ENCODE measurements at regions of chr13 and their contacts with region 1.

Region 1: GRCh38 chr13:31967155-31967554 is 64.4 kb upstream of the FRY start:
- DNase-seq: no peak
- H3K4me3 Mint-ChIP-seq: no peak overlapping the region
- H3K27ac Mint-ChIP-seq: no peak overlapping the region
- H3K4me1 Mint-ChIP-seq: peaks cover 8% of the 10 kb centered on the region
- H3K27me3 Mint-ChIP-seq: peaks cover 4% of the 10 kb centered on the region

Region 2: DNA sequence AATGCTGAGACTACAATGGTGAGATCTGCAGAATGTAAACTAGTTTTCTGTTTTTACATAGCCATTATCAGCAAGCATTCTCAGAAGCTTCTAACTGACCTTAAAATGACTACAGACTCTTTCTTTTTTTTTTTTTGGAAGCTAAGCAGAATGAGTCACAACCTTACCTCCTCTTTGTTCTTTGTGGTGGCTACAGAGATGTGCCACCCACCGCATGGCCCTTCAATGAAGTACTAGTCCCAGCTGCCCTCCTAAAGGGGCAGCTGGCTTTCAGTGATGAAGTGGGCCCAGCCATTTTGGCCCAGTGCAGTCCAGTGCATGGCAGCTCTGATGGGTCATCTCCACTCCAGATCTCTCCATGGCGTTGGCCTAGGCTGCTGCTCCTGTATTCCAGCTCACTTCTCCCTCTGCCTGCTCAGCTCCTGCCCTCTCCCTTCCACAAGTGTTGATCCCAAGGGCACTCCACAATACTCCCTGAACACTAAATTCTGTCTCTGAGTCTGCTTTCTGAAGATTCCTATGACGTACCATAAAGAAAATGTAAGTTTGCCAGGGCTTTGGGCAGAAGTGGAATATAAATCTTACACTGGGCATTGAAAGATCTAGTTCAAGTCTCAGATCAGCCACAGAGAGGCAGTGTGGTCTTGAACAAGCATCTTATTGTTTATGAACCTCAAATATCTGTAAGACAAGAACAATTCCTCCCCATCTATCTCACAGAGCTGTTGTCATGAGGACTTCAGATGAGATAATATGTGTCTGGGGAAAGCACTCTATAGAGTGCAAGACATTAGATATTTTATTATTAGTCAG is 142.2 kb before region 1 on chr13:
- CTCF ChIA-PET with region 1: no interaction called
- POLR2A ChIA-PET with region 1: no interaction called
- DNase-seq: no peak
- H3K4me3 Mint-ChIP-seq: no peak overlapping the region
- H3K27ac Mint-ChIP-seq: no peak overlapping the region
- H3K4me1 Mint-ChIP-seq: peaks cover 18% of the 10 kb centered on the region
- H3K27me3 Mint-ChIP-seq: peaks cover 2% of the 10 kb centered on the region

Region 3: GRCh38 chr13:31955741-31956140 is 11.4 kb before region 1 on chr13:
- CTCF ChIA-PET with region 1: interaction called, 10 read pairs
- POLR2A ChIA-PET with region 1: interaction called, 4 read pairs
- DNase-seq: no peak
- H3K4me3 Mint-ChIP-seq: no peak overlapping the region
- H3K27ac Mint-ChIP-seq: no peak overlapping the region
- H3K4me1 Mint-ChIP-seq: peaks cover 10% of the 10 kb centered on the region
- H3K27me3 Mint-ChIP-seq: peaks cover 2% of the 10 kb centered on the region